ENCODE measurements at regions of chr19 and their contacts with region 1.

Region 1: DNA sequence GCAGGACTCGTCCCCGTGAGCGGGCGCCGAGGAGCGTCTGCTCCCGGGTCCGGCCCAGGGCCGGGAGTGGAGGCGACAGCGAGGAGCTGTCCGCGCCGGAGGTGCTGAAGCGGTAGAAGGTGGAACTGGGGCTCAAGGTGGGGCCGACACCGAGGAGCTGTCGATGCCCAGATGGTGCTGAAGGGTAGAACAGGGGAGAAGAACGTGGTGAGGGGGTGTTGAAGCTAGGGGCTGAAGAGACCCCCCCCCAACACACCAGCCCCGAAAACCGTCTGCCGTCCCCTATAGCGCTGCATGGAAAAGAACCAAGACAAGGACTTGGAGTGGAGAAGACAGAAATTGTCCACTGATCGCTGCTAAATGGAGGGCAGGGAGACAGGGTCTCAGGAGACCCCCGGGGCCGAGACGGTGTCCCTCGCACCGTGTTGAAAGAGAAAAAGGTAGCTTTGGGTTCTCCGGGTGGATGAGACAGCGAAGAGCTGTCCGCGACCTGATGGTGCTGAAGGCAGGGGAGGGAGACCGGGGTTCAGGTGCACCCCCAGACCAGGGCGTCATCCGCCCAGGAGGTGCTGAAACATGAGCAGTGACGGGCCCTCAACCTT is 7.1 kb upstream of the PDE4C start:
- DNase-seq: peak; percentile 19 to 78 (median 39)
- ATAC-seq: peak; percentile 81
- H3K4me3 ChIP-seq: no peak overlapping the region
- H3K4me3 Mint-ChIP-seq: no peak overlapping the region
- H3K27ac ChIP-seq: no peak overlapping the region
- H3K27ac Mint-ChIP-seq: no peak overlapping the region
- H3K4me1 ChIP-seq: peaks cover 10% of the 10 kb centered on the region
- H3K4me1 Mint-ChIP-seq: no peaks in the 10 kb centered on the region
- H3K27me3 ChIP-seq: peaks cover 56 to 60% of the 10 kb centered on the region in 2 experiments
- H3K27me3 Mint-ChIP-seq: peaks cover 77% of the 10 kb centered on the region
- CTCF ChIP-seq: no peak

Region 2: GRCh38 chr19:17889609-17890214 is 343.6 kb before region 1 on chr19:
- CTCF ChIA-PET with region 1: no interaction called
- POLR2A ChIA-PET with region 1: no interaction called
- intact Hi-C with region 1: loop called in 1 of 2 experiments (anchors 10 kb)
- DNase-seq: peak in 1 of 14 experiments; percentile 15
- ATAC-seq: no peak
- H3K4me3 ChIP-seq: no peak overlapping the region
- H3K4me3 Mint-ChIP-seq: no peak overlapping the region
- H3K27ac ChIP-seq: no peak overlapping the region
- H3K27ac Mint-ChIP-seq: no peak overlapping the region
- H3K4me1 ChIP-seq: no peaks in the 10 kb centered on the region
- H3K4me1 Mint-ChIP-seq: no peaks in the 10 kb centered on the region
- H3K27me3 ChIP-seq: no peaks in the 10 kb centered on the region
- H3K27me3 Mint-ChIP-seq: no peaks in the 10 kb centered on the region
- CTCF ChIP-seq: no peak

Measured in CD4-positive, alpha-beta T cell (primary cell).